ENCODE measurements at regions of chr7 and their contacts with region 1.

Region 1: DNA sequence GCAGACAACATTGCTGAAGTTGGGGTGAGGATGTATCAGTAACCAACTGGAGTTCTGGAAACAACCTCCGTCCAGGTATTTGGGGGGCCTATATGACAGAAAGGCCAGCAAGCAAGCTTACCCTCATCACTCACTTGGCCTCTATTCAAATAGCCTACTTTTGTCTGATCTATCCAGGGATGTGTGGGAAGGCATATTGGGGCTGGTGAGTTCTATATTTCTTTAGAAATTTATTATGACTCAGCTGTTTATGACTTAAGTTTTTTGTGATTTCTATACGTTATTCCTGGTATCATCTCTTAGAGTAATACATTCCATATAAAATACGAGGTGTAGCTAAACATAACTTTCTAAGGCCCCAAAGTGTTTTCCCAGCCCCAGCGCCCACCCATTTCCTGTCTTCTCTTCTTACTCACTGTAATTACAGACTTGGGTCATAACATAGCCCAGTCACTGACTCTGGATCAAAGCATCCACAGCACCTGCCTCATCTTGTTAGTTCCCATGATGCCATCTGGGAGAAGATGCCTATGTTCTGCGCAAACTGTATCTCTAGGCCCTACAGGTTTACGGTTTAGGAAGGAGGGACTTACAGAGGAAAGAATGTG is 18.1 kb downstream of the GARS1 start:
- DNase-seq: no peak
- H3K4me3 ChIP-seq: no peak overlapping the region
- H3K27ac ChIP-seq: no peak overlapping the region
- H3K4me1 ChIP-seq: no peaks in the 10 kb centered on the region
- H3K27me3 ChIP-seq: no peaks in the 10 kb centered on the region
- CTCF ChIP-seq: no peak
- EP300 ChIP-seq: no peak
- POLR2A ChIP-seq: 0 out of 3 replicates have a peak, but pooled peaks of 1 of the 2 experiments have one; percentile 22
- RAD21 ChIP-seq: no peak

Region 2: DNA sequence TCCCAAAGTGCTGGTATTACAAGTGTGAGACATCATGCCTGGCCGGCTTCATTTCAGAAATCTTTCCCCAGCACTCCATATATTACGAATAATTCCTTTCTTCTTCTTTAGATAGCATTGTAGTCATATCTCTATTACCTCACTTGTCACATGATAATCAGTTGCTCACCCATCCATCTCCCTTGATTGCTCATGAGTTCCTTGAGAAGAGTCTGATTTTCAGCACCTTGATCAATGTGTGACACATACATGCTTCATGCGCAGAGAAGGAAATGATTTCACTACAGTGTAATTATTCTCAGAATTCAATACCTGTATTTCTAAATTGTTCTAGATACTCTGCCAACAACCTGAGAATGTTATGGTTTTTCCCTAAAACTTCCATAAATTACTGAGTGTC is 81.5 kb before region 1 on chr7:
- CTCF ChIA-PET with region 1: no interaction called
- POLR2A ChIA-PET with region 1: no interaction called
- DNase-seq: no peak
- H3K4me3 ChIP-seq: no peak overlapping the region
- H3K27ac ChIP-seq: no peak overlapping the region
- H3K4me1 ChIP-seq: no peaks in the 10 kb centered on the region
- H3K27me3 ChIP-seq: no peaks in the 10 kb centered on the region
- CTCF ChIP-seq: no peak
- EP300 ChIP-seq: no peak
- POLR2A ChIP-seq: no peak
- RAD21 ChIP-seq: no peak

Region 3: DNA sequence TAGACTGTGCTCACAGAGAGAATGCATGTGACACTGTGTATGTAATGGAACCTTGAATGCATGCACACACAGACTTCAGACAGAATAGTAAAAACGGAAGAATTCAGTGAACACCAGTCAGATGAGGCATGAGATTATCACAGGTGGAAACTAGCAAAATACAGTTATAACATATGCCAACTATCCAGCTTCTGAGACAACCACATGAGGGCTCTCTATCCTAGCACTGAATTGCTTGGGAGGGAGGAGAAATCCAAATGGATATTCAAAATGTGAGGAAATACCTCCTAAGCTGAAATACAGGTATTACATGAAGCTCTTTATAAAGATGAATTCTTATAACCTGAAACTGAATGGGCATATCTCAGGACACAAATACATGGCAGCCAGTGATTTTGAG is 12.5 kb after region 1 on chr7:
- CTCF ChIA-PET with region 1: interaction called, 9 read pairs
- POLR2A ChIA-PET with region 1: interaction called, 323 read pairs
- DNase-seq: no peak
- H3K4me3 ChIP-seq: no peak overlapping the region
- H3K27ac ChIP-seq: no peak overlapping the region
- H3K4me1 ChIP-seq: no peaks in the 10 kb centered on the region
- H3K27me3 ChIP-seq: no peaks in the 10 kb centered on the region
- CTCF ChIP-seq: no peak; a peak in 1 of 4 replicates
- EP300 ChIP-seq: no peak
- POLR2A ChIP-seq: no peak
- RAD21 ChIP-seq: peak; percentile 36 to 50

Measured in H1 (cell line).